Activated T-helper 2 cell treated with anti-CD3 and anti-CD28 coated beads, Interferon-gamma antibody, Interleukin-2, Interleukin-4, amounts not matched to agents 10 μg/mL and 5 μg/mL and 100 μg/mL, durations not matched to agents 14 hours and 24 hours and 36 hours (primary cell): ENCODE measurements at regions of chr5 and their contacts with region 1.

Region 1: GRCh38 chr5:139574641-139575312 is 13.6 kb downstream of the UBE2D2 start:
- DNase-seq: no peak
- H3K4me3 Mint-ChIP-seq: peak overlapping the region; percentile 24
- H3K27ac Mint-ChIP-seq: peak overlapping the region; percentile 72
- H3K4me1 Mint-ChIP-seq: peaks cover 54% of the 10 kb centered on the region
- H3K27me3 Mint-ChIP-seq: no peaks in the 10 kb centered on the region

Region 2: DNA sequence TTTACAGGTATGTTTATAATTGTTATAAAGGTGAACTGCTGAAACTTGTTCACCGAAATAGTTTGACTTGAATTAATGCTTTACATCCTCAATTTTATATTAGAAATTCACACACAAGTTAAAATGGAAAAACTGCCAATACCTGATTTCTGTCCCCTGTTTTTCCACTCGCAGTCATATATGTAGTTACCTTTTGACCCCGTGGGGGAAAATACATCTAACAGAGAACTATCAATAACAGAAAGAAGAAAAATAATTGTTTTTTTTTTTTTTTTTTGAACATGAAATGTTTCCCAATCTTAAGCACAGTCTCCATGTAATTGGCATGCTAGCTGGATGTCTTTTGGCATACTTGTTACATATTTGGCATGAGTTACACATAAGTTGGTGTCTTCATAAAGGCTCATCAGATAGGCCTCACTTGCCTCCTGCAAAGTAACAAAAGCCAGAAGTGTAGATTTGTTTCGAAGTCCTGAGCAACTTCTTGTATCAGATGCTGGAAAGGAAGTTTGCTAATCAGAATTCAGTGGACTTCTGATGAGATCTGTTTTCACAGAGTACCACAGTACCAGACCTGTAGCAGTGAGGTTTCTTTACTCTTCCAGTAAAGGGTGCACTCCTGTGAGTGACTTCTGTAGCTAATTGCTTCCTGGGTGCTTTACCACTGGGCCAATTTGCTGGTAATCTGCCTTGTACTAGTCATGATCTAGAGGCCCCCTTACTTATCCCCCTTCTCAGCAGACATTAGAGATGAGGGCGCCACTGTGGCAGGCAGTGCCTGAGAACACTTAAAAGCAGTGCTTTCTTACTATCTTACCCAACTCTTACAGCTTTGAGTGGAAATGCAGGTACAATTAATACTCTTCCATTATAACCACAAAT is 37.2 kb after region 1 on chr5:
- intact Hi-C with region 1: loop called (anchors 5 kb)
- DNase-seq: no peak
- H3K4me3 Mint-ChIP-seq: no peak overlapping the region
- H3K27ac Mint-ChIP-seq: peak overlapping the region; percentile 68
- H3K4me1 Mint-ChIP-seq: peaks cover 7% of the 10 kb centered on the region
- H3K27me3 Mint-ChIP-seq: no peaks in the 10 kb centered on the region

Region 3: GRCh38 chr5:139696894-139697658 is 122.3 kb after region 1 on chr5:
- intact Hi-C with region 1: loop called (anchors 10 kb)
- DNase-seq: no peak
- H3K4me3 Mint-ChIP-seq: no peak overlapping the region
- H3K27ac Mint-ChIP-seq: no peak overlapping the region
- H3K4me1 Mint-ChIP-seq: peaks cover 8% of the 10 kb centered on the region
- H3K27me3 Mint-ChIP-seq: peaks cover 30% of the 10 kb centered on the region